Breast epithelium (tissue), 4 donors: ENCODE measurements at regions of chr9 and their contacts with region 1.

Region 1: GRCh38 chr9:85522459-85523092 is 219.2 kb downstream of the AGTPBP1 start:
- DNase-seq: no peak
- H3K4me3 ChIP-seq: peak overlapping the region; percentile 33 to 67 (median 48)
- H3K27ac ChIP-seq: peak overlapping the region in 1 of 2 donors; percentile 63
- H3K4me1 ChIP-seq: peaks cover 0 to 5% of the 10 kb centered on the region in 2 donors
- H3K27me3 ChIP-seq: peaks cover 0 to 23% of the 10 kb centered on the region in 2 donors
- CTCF ChIP-seq: no peak
- POLR2A ChIP-seq: no peak

Region 2: DNA sequence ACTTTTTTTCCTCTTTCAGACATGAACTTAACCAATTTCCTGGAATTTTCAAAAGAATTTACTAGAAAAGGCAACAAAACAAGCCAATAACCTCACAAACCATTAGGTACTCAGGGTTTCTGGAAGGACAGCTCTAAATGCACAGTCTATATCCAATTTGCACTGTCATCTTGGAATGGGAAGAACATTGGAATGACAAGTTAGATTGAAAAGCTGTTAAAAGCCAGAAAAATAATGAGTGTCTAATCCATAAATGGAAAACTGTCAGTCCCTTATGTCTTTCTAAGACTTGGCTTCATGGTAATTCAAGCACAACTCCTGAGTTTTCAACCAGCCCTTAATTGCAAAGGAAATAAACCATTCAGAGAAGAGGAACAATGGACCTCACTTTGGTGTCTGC is 958.9 kb before region 1 on chr9:
- intact Hi-C with region 1: loop called (anchors 5 kb)
- DNase-seq: no peak
- H3K4me3 ChIP-seq: no peak overlapping the region
- H3K27ac ChIP-seq: no peak overlapping the region
- H3K4me1 ChIP-seq: no peaks in the 10 kb centered on the region
- H3K27me3 ChIP-seq: no peaks in the 10 kb centered on the region
- CTCF ChIP-seq: no peak
- POLR2A ChIP-seq: no peak

Region 3: GRCh38 chr9:87307848-87308247 is 1785.3 kb after region 1 on chr9:
- intact Hi-C with region 1: no loop called
- DNase-seq: no peak
- H3K4me3 ChIP-seq: no peak overlapping the region
- H3K27ac ChIP-seq: no peak overlapping the region
- H3K4me1 ChIP-seq: no peaks in the 10 kb centered on the region
- H3K27me3 ChIP-seq: no peaks in the 10 kb centered on the region
- CTCF ChIP-seq: no peak
- POLR2A ChIP-seq: no peak